Activated T-helper 2 cell treated with anti-CD3 and anti-CD28 coated beads, Interferon-gamma antibody, Interleukin-2, Interleukin-4, amounts not matched to agents 10 μg/mL and 5 μg/mL and 100 μg/mL, durations not matched to agents 14 hours and 24 hours and 36 hours (primary cell): ENCODE measurements at regions of chr3 and their contacts with region 1.

Region 1: DNA sequence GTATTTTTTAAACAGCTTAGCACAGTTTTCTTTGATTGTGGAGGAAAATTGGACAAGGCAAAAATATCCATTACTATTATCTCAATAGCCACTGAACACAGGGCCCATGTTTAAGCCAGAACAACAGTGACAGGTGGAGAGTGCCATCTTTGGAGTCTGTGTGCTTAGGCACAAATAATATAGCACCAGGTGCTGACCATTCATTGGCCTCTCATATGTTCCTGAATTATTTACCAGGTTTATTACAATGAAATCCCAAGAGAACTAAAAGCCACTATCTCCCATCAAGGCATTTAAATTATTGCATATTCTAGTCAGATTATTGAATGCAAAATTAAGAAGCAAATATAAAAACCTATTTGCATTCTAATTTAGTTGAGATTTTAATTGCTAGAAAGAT is 39.6 kb downstream of the GPR156 start:
- DNase-seq: no peak
- H3K4me3 Mint-ChIP-seq: no peak overlapping the region
- H3K27ac Mint-ChIP-seq: no peak overlapping the region
- H3K4me1 Mint-ChIP-seq: no peaks in the 10 kb centered on the region
- H3K27me3 Mint-ChIP-seq: peaks cover 24% of the 10 kb centered on the region

Region 2: DNA sequence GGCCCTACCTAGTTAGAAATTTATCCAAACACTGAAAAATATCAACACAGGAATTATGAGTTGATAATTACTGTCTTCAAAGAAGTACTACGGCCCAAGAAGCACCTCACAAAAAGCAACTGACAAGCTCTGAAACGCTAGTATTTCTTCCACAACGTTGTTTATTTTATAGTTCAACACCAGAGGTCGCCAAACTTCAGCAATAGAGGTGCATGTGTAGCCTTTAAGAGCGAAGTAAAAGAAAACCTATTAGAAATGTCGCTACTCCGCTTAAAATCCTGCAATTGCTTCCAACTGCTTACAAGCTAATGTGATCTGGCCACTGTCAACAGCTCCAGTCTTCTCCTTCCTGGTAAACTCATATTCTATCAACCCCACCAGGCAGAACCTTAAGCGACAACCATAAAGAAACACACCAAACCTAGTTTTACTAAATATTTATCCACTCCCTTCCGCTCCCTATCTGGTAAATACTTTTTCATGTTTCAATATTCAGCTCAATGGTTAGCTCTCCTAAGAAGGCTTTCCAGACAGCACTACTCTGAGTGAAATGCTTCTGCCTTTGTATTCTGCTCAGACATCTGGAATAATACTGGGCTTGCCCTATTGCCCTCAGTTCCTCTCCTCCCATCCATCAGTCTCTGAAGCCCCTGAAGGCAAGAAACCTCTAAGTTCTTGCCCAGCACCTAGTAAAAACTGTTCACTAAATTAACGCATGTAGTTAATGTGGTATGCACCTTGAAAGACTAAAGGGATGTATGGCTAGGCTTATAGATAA is 353.3 kb before region 1 on chr3:
- intact Hi-C with region 1: loop called (anchors 2 kb)
- DNase-seq: peak; percentile 12
- H3K4me3 Mint-ChIP-seq: no peak overlapping the region
- H3K27ac Mint-ChIP-seq: no peak overlapping the region
- H3K4me1 Mint-ChIP-seq: peaks cover 2% of the 10 kb centered on the region
- H3K27me3 Mint-ChIP-seq: no peaks in the 10 kb centered on the region

Region 3: DNA sequence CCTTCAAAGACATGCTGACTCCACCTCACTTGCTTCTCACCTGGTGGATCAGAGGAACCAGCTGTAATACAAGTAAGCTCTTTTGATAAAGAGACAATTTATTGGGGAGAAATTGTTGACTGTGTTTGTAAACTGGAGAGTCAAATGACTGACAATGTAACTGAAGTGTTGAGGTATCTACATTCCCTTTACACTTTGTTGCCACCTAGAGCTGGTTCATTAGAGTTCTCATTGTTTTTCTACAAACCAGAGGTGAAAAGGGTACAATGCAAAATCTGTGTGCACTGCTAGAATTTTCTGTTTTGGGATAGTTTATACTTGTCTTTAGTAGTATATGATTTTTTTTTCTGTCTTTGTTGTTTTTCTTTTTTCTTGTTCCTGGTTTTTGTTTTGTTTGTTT is 112.4 kb after region 1 on chr3:
- intact Hi-C with region 1: loop called (anchors 2 kb)
- DNase-seq: no peak
- H3K4me3 Mint-ChIP-seq: no peak overlapping the region
- H3K27ac Mint-ChIP-seq: no peak overlapping the region
- H3K4me1 Mint-ChIP-seq: no peaks in the 10 kb centered on the region
- H3K27me3 Mint-ChIP-seq: peaks cover 57% of the 10 kb centered on the region

Region 4: GRCh38 chr3:120417272-120417911 is 172.0 kb after region 1 on chr3:
- intact Hi-C with region 1: loop called (anchors 1 kb)
- DNase-seq: peak; percentile 81
- H3K4me3 Mint-ChIP-seq: peak overlapping the region; percentile 80
- H3K27ac Mint-ChIP-seq: no peak overlapping the region
- H3K4me1 Mint-ChIP-seq: peaks cover 14% of the 10 kb centered on the region
- H3K27me3 Mint-ChIP-seq: peaks cover 21% of the 10 kb centered on the region

Region 5: DNA sequence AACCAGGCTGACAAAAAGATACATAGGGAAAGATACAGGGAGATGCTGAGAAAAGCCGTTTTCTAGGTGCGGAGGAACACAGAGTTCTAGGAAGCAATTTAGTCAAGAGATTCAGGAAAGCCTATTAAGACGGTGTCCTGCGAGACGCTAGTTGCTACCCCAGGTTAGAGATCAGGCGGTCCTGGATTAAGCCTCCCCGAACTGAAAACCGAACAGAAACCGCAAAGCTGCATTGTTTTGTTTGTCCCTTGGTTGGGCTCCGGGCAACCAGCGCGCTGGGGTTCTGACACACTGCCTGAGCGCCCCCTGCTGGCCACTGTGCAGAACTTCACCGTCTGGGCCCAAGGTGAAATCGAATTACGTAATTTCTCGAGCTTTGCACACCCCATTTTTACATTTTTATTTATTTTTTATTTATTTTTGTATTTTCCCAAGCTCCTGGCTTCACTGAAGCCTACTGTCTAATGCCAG is 313.4 kb after region 1 on chr3:
- intact Hi-C with region 1: loop called (anchors 2 kb)
- DNase-seq: peak; percentile 83
- H3K4me3 Mint-ChIP-seq: peak overlapping the region; percentile 78
- H3K27ac Mint-ChIP-seq: peak overlapping the region; percentile 58
- H3K4me1 Mint-ChIP-seq: peaks cover 10% of the 10 kb centered on the region
- H3K27me3 Mint-ChIP-seq: peaks cover 9% of the 10 kb centered on the region